CD4-positive, alpha-beta memory T cell (primary cell): ENCODE measurements at regions of chr1 and their contacts with region 1.

Region 1: DNA sequence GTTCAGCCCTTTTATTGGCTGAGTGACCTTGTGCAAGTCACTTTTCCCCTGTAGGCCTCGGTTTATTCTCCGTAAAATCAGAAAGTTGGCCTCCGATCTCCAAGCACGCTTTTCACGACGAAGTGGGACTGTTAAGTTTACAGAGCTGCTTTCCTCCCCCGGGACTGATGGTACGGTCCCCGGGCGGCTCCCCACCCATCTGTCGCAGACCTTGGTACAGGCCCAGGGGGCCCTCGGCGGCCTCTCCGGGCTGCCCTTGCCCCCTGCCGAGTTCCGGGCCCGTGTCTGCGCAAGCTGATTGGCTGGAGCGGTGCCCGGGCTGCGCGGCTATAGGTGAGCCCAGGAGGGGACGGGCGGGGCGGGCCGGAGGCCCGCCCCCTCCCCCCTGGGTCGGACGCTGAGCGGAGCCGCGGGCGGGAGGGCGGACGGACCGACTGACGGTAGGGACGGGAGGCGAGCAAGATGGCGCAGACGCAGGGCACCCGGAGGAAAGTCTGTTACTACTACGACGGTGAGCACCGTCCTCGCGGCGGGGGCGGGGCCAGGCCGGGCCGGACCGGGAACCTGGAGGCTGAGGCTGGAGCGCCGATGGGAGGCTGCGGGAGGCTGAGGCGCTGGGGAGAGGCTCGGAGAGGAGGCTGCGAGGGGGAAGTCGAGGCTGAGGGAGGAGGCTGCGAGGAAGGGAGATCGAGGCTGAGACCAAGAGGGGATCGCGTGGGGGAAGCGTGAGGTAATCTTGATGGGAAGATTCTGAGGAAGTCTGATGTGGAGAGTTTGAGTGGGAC is at the start of gene HDAC1:
- DNase-seq: peak; percentile 96 to 97 (median 97)
- H3K4me3 ChIP-seq: peak within 1 kb of the TSS; percentile 83 to 93
- H3K4me3 Mint-ChIP-seq: peak within 1 kb of the TSS; percentile 97 to 100 (median 99)
- H3K27ac ChIP-seq: peak within 1 kb of the TSS; percentile 93
- H3K27ac Mint-ChIP-seq: peak within 1 kb of the TSS; percentile 94 to 99 (median 96)
- H3K4me1 ChIP-seq: peaks cover 62% of the 10 kb centered on the region
- H3K4me1 Mint-ChIP-seq: peaks cover 32 to 64% (median 47%) of the 10 kb centered on the region in 4 donors
- H3K27me3 ChIP-seq: no peaks in the 10 kb centered on the region
- H3K27me3 Mint-ChIP-seq: peaks cover 0 to 2% of the 10 kb centered on the region in 2 donors
- total RNA-seq, gene HDAC1: 174 to 190 TPM

Region 2: GRCh38 chr1:32200226-32201010 is 91.5 kb before region 1 on chr1 and contains the start of gene CCDC28B:
- CTCF ChIA-PET with region 1: no interaction called
- POLR2A ChIA-PET with region 1: interaction called, 11 read pairs
- intact Hi-C with region 1: no loop called
- DNase-seq: peak; percentile 51 to 73 (median 58)
- H3K4me3 ChIP-seq: peak within 1 kb of the TSS; percentile 57 to 85
- H3K4me3 Mint-ChIP-seq: peak within 1 kb of the TSS; percentile 85 to 95 (median 92)
- H3K27ac ChIP-seq: peak within 1 kb of the TSS; percentile 84
- H3K27ac Mint-ChIP-seq: peak within 1 kb of the TSS; percentile 87 to 97 (median 95)
- H3K4me1 ChIP-seq: peaks cover 59% of the 10 kb centered on the region
- H3K4me1 Mint-ChIP-seq: peaks cover 38 to 76% (median 56%) of the 10 kb centered on the region in 4 donors
- H3K27me3 ChIP-seq: no peaks in the 10 kb centered on the region
- H3K27me3 Mint-ChIP-seq: no peaks in the 10 kb centered on the region
- total RNA-seq, gene CCDC28B: 4.2 to 5.1 TPM

Region 3: GRCh38 chr1:32247983-32248889 is 43.7 kb before region 1 on chr1:
- CTCF ChIA-PET with region 1: interaction called, 47 read pairs
- POLR2A ChIA-PET with region 1: interaction called, 226 read pairs
- intact Hi-C with region 1: loop called (anchors 1 kb)
- DNase-seq: peak; percentile 63 to 75 (median 68)
- H3K4me3 ChIP-seq: peak overlapping the region; percentile 42
- H3K4me3 Mint-ChIP-seq: peak overlapping the region; percentile 82 to 100 (median 94)
- H3K27ac ChIP-seq: peak overlapping the region; percentile 89
- H3K27ac Mint-ChIP-seq: peak overlapping the region; percentile 91 to 99 (median 99)
- H3K4me1 ChIP-seq: peaks cover 52% of the 10 kb centered on the region
- H3K4me1 Mint-ChIP-seq: peaks cover 26 to 64% (median 37%) of the 10 kb centered on the region in 4 donors
- H3K27me3 ChIP-seq: no peaks in the 10 kb centered on the region
- H3K27me3 Mint-ChIP-seq: no peaks in the 10 kb centered on the region

Region 4: GRCh38 chr1:32307323-32307722 is 15.4 kb after region 1 on chr1:
- CTCF ChIA-PET with region 1: interaction called, 4 read pairs
- POLR2A ChIA-PET with region 1: interaction called, 20 read pairs
- intact Hi-C with region 1: no loop called
- DNase-seq: no peak
- H3K4me3 ChIP-seq: no peak overlapping the region
- H3K4me3 Mint-ChIP-seq: peak overlapping the region in 2 of 8 donors; percentile 8 to 43
- H3K27ac ChIP-seq: peak overlapping the region; percentile 12
- H3K27ac Mint-ChIP-seq: peak overlapping the region; percentile 2 to 90 (median 44)
- H3K4me1 ChIP-seq: peaks cover 61% of the 10 kb centered on the region
- H3K4me1 Mint-ChIP-seq: peaks cover 48 to 78% (median 58%) of the 10 kb centered on the region in 4 donors
- H3K27me3 ChIP-seq: no peaks in the 10 kb centered on the region
- H3K27me3 Mint-ChIP-seq: no peaks in the 10 kb centered on the region

Region 5: GRCh38 chr1:32345289-32345827 is 53.5 kb after region 1 on chr1:
- CTCF ChIA-PET with region 1: interaction called, 3 read pairs
- POLR2A ChIA-PET with region 1: interaction called, 11 read pairs
- intact Hi-C with region 1: no loop called
- DNase-seq: peak; percentile 43 to 58 (median 51)
- H3K4me3 ChIP-seq: no peak overlapping the region
- H3K4me3 Mint-ChIP-seq: peak overlapping the region in 6 of 8 donors; percentile 8 to 72 (median 42)
- H3K27ac ChIP-seq: no peak overlapping the region
- H3K27ac Mint-ChIP-seq: peak overlapping the region in 6 of 7 donors; percentile 26 to 75 (median 58)
- H3K4me1 ChIP-seq: peaks cover 44% of the 10 kb centered on the region
- H3K4me1 Mint-ChIP-seq: peaks cover 25 to 52% (median 40%) of the 10 kb centered on the region in 4 donors
- H3K27me3 ChIP-seq: no peaks in the 10 kb centered on the region
- H3K27me3 Mint-ChIP-seq: no peaks in the 10 kb centered on the region

Region 6: DNA sequence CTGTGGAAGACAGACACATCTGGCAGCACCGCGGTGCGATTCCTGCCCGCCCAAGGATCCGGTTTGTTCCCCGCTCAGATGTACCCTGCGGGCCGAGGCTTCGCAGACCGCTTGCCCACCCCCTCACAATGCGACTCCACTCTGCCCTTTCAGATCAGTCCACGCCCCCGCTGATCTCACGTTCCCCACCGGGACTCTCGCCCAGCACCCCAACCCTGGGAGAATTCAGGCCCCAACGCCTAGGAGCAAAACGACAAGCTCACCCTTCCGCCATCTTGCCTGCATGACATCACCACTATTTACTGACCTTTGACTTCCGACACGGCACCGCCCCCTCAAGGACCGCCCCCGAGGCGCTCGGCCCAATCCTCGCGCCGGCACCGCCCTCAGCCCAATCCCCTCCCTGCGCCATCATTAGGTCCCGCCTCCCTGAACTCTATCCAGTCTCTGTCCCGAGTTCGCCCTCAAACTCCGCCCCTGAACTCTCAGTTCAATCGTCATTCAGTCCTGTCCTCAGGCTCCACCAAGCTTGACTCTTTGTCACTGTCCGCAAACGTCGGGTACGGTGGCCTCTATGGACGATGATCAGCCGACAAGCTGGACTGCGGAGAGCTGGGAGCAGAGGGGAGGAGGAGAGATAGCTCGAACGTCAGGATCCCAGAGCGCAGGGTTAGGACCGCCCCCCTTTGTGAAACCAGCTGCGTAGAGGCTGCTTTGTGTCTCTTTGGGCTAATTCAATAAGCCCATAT is 102.4 kb after region 1 on chr1 and contains the start of gene BSDC1:
- CTCF ChIA-PET with region 1: interaction called, 3 read pairs
- POLR2A ChIA-PET with region 1: interaction called, 6 read pairs
- intact Hi-C with region 1: loop called (anchors 2 kb)
- DNase-seq: peak; percentile 98 to 99 (median 99)
- H3K4me3 ChIP-seq: peak within 1 kb of the TSS; percentile 87
- H3K4me3 Mint-ChIP-seq: peak within 1 kb of the TSS; percentile 99 to 100 (median 100)
- H3K27ac ChIP-seq: peak within 1 kb of the TSS; percentile 95
- H3K27ac Mint-ChIP-seq: peak within 1 kb of the TSS; percentile 92 to 100 (median 100)
- H3K4me1 ChIP-seq: peaks cover 43% of the 10 kb centered on the region
- H3K4me1 Mint-ChIP-seq: peaks cover 5 to 25% (median 19%) of the 10 kb centered on the region in 4 donors
- H3K27me3 ChIP-seq: no peaks in the 10 kb centered on the region
- H3K27me3 Mint-ChIP-seq: peaks cover 0 to 1% of the 10 kb centered on the region in 2 donors
- total RNA-seq, gene BSDC1: 106 to 112 TPM

Region 7: DNA sequence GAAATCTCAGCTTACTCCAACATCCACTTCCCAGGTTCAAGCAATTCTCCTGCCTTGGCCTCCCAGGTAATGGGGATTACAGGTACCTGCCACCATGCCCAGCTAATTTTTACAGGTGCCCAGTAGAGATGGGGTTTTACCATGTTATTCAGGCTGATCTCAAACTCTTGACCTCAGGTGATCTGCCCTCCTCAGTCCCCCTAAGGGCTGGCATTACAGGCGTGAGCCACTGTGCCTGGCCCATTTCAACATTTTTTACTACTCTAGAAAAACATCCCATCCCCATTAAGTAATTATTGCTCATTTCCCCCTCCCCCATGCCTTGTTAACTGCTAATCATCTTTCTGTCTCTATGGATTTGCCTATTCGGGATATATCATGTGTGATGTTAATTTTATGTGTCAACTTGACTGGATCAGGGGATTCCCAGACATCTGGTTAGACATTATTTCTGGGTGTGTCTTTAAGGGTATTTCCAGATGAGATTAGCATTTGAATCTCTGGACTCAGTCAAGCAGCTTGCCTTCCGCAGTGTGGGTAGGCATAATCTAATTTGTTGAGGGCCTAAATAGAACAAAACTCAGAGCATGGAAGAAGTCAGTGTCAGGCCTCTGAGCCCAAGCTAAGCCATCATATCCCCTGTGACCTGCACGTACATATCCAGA is 140.0 kb after region 1 on chr1:
- CTCF ChIA-PET with region 1: no interaction called
- POLR2A ChIA-PET with region 1: no interaction called
- intact Hi-C with region 1: no loop called
- DNase-seq: no peak
- H3K4me3 ChIP-seq: no peak overlapping the region
- H3K4me3 Mint-ChIP-seq: no peak overlapping the region
- H3K27ac ChIP-seq: no peak overlapping the region
- H3K27ac Mint-ChIP-seq: no peak overlapping the region
- H3K4me1 ChIP-seq: no peaks in the 10 kb centered on the region
- H3K4me1 Mint-ChIP-seq: no peaks in the 10 kb centered on the region
- H3K27me3 ChIP-seq: peaks cover under 1% of the 10 kb centered on the region
- H3K27me3 Mint-ChIP-seq: peaks cover 25 to 41% of the 10 kb centered on the region in 2 donors